ENCODE measurements at regions of chr20 and their contacts with region 1.

Region 1: GRCh38 chr20:13243826-13244376 is 22.8 kb downstream of the ISM1 start:
- DNase-seq: no peak
- ATAC-seq: no peak
- H3K4me3 ChIP-seq: no peak overlapping the region
- H3K4me3 Mint-ChIP-seq: no peak overlapping the region
- H3K27ac ChIP-seq: no peak overlapping the region
- H3K27ac Mint-ChIP-seq: no peak overlapping the region
- H3K4me1 ChIP-seq: peaks cover 28% of the 10 kb centered on the region
- H3K4me1 Mint-ChIP-seq: peaks cover 28% of the 10 kb centered on the region
- H3K27me3 ChIP-seq: no peaks in the 10 kb centered on the region
- H3K27me3 Mint-ChIP-seq: no peaks in the 10 kb centered on the region
- CTCF ChIP-seq: no peak

Region 2: DNA sequence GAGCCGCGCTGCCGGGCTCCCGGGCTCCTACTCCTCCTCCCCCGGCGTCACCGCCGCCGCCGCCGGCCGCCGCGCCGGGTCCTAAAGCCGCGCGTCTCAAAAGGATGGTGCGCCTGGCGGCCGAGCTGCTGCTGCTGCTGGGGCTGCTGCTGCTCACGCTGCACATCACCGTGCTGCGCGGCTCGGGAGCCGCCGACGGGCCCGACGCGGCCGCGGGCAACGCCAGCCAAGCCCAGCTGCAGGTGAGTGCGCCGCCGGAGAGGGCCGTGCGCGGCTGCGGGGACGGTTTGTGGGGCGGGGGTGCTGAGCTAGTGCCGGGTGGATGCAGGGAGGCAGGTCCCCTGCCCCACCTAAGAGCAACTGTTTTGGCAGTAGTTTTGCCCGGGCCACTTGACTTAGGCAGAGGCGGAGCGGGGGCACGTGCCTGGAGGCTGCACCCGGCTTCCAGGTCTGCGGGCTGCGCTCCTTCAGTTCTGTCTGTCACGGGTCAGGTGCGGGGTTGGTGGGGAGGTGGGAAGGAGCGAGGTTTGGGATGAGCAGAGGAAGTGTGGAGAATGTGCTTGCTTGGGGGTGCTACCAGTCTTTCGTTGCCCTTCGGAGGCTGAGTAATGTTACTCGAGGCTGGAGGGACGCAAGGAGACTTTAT is 22.1 kb before region 1 on chr20:
- CTCF ChIA-PET with region 1: interaction called, 4 read pairs
- POLR2A ChIA-PET with region 1: interaction called, 13 read pairs
- intact Hi-C with region 1: no loop called
- DNase-seq: peak; percentile 42 to 88 (median 67)
- ATAC-seq: peak; percentile 83
- H3K4me3 ChIP-seq: peak overlapping the region; percentile 57
- H3K4me3 Mint-ChIP-seq: peak overlapping the region; percentile 91
- H3K27ac ChIP-seq: no peak overlapping the region
- H3K27ac Mint-ChIP-seq: peak overlapping the region; percentile 62
- H3K4me1 ChIP-seq: peaks cover 29% of the 10 kb centered on the region
- H3K4me1 Mint-ChIP-seq: peaks cover 21% of the 10 kb centered on the region
- H3K27me3 ChIP-seq: peaks cover 13 to 23% of the 10 kb centered on the region in 2 experiments
- H3K27me3 Mint-ChIP-seq: peaks cover 40% of the 10 kb centered on the region
- CTCF ChIP-seq: no peak

Region 3: DNA sequence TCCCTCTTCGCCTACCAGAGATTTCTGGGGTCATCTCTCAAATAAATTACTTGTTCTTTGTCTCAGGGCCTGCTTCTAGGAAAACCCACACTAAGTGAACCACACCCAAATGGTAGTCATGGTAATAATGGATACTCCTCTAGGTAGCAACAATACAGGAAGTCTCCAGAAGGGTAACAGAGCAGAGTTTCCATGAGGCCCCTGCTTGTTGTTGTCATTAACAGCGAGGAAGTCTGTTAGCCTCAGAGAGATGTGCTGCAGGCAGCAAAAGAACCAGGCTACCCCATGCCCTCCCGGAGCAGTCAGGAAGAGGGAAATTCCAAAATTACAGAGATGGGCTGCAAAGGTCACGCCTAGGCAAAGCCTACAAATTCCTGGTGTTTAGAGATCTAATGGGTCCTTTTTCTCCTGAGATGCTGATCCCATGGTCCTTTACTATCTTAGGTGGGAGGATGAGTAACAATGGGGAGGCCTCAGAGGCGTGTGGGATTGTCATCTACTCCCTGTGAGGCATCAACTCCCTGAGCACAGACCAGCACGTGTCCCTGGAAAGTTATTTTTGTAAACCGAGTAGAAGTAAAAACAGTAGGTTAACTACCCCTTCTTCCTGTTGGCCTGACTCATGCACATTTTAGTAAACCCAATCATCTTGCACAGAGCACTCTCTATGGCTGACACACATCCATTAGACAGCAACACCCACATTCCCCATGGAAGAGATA is 12.7 kb before region 1 on chr20:
- CTCF ChIA-PET with region 1: interaction called, 3 read pairs
- POLR2A ChIA-PET with region 1: interaction called, 7 read pairs
- intact Hi-C with region 1: loop called (anchors 2 kb)
- DNase-seq: peak in 12 of 14 experiments; percentile 11 to 90 (median 35)
- ATAC-seq: peak; percentile 96
- H3K4me3 ChIP-seq: no peak overlapping the region
- H3K4me3 Mint-ChIP-seq: peak overlapping the region; percentile 49
- H3K27ac ChIP-seq: peak overlapping the region; percentile 61 to 88
- H3K27ac Mint-ChIP-seq: peak overlapping the region; percentile 85
- H3K4me1 ChIP-seq: peaks cover 18% of the 10 kb centered on the region
- H3K4me1 Mint-ChIP-seq: peaks cover 41% of the 10 kb centered on the region
- H3K27me3 ChIP-seq: no peaks in the 10 kb centered on the region
- H3K27me3 Mint-ChIP-seq: no peaks in the 10 kb centered on the region
- CTCF ChIP-seq: no peak

Region 4: GRCh38 chr20:13261460-13262301 is 17.8 kb after region 1 on chr20:
- CTCF ChIA-PET with region 1: interaction called, 5 read pairs
- POLR2A ChIA-PET with region 1: interaction called, 5 read pairs
- intact Hi-C with region 1: loop called in 1 of 2 experiments (anchors 1 kb)
- DNase-seq: peak; percentile 45 to 84 (median 67)
- ATAC-seq: peak; percentile 93
- H3K4me3 ChIP-seq: no peak overlapping the region
- H3K4me3 Mint-ChIP-seq: no peak overlapping the region
- H3K27ac ChIP-seq: no peak overlapping the region
- H3K27ac Mint-ChIP-seq: no peak overlapping the region
- H3K4me1 ChIP-seq: peaks cover 15% of the 10 kb centered on the region
- H3K4me1 Mint-ChIP-seq: peaks cover 39% of the 10 kb centered on the region
- H3K27me3 ChIP-seq: no peaks in the 10 kb centered on the region
- H3K27me3 Mint-ChIP-seq: no peaks in the 10 kb centered on the region
- CTCF ChIP-seq: peak; percentile 73

Region 5: GRCh38 chr20:13455713-13456112 is 211.8 kb after region 1 on chr20:
- CTCF ChIA-PET with region 1: no interaction called
- POLR2A ChIA-PET with region 1: no interaction called
- intact Hi-C with region 1: no loop called
- DNase-seq: no peak
- ATAC-seq: no peak
- H3K4me3 ChIP-seq: no peak overlapping the region
- H3K4me3 Mint-ChIP-seq: no peak overlapping the region
- H3K27ac ChIP-seq: no peak overlapping the region
- H3K27ac Mint-ChIP-seq: no peak overlapping the region
- H3K4me1 ChIP-seq: no peaks in the 10 kb centered on the region
- H3K4me1 Mint-ChIP-seq: no peaks in the 10 kb centered on the region
- H3K27me3 ChIP-seq: no peaks in the 10 kb centered on the region
- H3K27me3 Mint-ChIP-seq: no peaks in the 10 kb centered on the region
- CTCF ChIP-seq: no peak